ENCODE measurements at regions of chr2 and their contacts with region 1.

Region 1: DNA sequence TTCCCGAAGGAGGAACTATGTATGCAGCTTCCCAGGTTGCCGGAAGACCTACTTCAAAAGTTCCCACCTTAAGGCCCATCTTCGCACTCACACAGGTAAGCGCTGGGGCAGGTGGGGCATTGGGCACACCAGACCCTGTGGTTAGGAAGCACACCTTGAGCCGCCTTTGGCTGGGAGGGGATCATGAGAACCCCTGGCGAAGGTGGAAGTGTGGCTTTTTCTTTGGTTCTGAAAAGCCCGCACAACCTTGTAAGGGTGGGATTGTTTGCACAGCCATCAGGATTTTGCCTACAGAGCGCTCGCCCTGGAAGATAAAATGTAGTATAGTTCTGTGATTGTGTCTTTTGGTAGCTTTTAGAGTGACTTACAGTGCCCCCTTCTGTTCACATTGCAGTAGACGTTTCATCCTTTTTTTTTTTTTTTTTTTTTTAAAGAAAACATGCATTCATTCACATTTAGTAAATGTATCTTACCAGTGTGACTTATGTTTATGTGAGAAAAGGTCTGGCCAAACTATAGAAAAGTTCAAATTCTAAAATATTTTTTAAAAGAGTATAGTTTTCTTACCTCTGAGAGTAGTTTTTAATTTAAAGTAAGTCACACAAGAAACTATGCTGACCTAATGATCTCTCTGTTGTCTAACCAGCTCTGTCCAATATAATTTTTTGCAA is 5.3 kb downstream of the KLF11 start:
- DNase-seq: peak; percentile 75
- H3K4me3 ChIP-seq: no peak overlapping the region
- H3K27ac ChIP-seq: no peak overlapping the region
- H3K4me1 ChIP-seq: no peaks in the 10 kb centered on the region
- H3K27me3 ChIP-seq: no peaks in the 10 kb centered on the region
- CTCF ChIP-seq: peak; percentile 82

Region 2: GRCh38 chr2:9813312-9814133 is 235.1 kb before region 1 on chr2:
- CTCF ChIA-PET with region 1: interaction called, 17 read pairs
- POLR2A ChIA-PET with region 1: no interaction called
- intact Hi-C with region 1: loop called (anchors 2 kb)
- DNase-seq: peak; percentile 74
- H3K4me3 ChIP-seq: no peak overlapping the region
- H3K27ac ChIP-seq: no peak overlapping the region
- H3K4me1 ChIP-seq: peaks cover 6% of the 10 kb centered on the region
- H3K27me3 ChIP-seq: no peaks in the 10 kb centered on the region
- CTCF ChIP-seq: peak; percentile 97

Region 3: DNA sequence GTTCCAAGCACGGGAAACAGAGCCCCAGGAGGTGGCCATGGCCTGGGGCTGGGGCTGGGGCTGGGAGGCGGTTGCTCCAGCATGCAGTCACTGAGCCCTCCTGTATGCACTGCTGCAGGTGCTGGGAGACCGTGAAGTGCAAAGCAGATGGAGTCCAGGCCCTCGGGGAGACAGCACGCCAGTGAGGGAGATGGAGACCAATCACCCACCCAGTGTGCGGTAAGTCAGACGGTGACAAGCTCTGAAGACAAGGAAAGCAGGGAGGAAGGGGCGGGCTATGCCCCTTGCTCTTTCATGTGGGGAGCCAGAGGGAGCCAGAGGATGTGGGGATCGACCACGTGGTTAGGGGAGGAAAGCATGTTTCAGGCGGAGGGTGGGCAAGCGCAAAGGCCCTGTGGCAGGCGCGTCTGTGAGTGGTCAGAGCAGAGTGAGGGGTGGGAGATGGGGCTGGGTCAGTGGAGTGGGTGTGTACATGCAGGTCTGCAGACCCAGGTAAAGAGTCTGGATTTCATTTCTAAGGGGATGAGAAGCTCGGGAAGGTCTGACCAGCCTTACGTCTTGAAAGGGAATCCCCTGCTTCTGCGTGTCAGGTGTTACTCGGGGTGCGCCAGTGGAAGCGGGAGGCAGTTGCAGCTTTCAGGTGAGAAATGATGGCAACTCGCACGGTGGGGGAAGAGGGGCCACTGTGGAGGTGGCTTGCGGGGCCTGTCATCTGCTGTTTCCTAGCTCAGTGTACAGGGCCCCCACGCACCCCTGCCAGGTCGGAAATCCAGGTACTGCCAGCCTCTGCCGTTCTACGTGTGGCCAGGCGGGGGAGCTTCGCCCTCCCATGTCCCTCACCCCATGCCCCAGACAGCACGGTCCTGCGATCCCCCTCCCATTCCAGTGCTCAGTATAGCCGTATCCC is 93.4 kb after region 1 on chr2:
- CTCF ChIA-PET with region 1: no interaction called
- POLR2A ChIA-PET with region 1: no interaction called
- intact Hi-C with region 1: no loop called
- DNase-seq: no peak
- H3K4me3 ChIP-seq: no peak overlapping the region
- H3K27ac ChIP-seq: no peak overlapping the region
- H3K4me1 ChIP-seq: no peaks in the 10 kb centered on the region
- H3K27me3 ChIP-seq: no peaks in the 10 kb centered on the region
- CTCF ChIP-seq: peak; percentile 55

Region 4: DNA sequence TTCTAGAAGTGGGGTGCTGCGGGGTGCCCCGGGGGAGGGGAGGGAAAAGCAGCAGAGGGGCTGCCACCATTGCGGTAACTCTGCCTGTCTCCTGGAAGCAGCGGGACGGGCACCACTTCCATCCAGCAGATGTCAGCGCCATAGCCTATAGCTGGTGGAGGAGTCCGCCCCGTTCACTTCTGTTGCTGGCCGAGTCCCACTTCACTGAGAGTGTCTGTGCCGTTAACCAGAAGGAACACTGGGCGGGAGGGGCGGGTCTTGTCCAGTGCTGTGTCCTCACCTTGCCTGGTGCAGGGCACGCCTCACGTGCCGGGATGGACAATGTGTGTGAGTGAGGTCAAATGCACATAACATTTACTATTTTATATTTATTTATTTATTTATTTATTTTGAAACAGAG is 418.8 kb after region 1 on chr2:
- CTCF ChIA-PET with region 1: no interaction called
- POLR2A ChIA-PET with region 1: no interaction called
- intact Hi-C with region 1: no loop called
- DNase-seq: no peak
- H3K4me3 ChIP-seq: no peak overlapping the region
- H3K27ac ChIP-seq: no peak overlapping the region
- H3K4me1 ChIP-seq: no peaks in the 10 kb centered on the region
- H3K27me3 ChIP-seq: no peaks in the 10 kb centered on the region
- CTCF ChIP-seq: no peak

Measured in A673 (cell line).